CD4-positive, alpha-beta T cell (primary cell): ENCODE measurements at regions of chr2 and their contacts with region 1.

Region 1: DNA sequence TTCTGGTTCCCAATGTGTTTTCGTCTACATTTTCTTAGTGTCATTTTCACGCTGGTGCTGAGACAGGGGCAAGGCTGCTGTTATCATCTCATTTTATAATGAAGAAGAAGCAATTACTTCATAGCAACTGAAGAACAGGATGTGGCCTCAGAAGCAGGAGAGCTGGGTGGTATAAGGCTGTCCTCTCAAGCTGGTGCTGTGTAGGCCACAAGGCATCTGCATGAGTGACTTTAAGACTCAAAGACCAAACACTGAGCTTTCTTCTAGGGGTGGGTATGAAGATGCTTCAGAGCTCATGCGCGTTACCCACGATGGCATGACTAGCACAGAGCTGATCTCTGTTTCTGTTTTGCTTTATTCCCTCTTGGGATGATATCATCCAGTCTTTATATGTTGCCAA is 7.3 kb downstream of the IL36G start:
- DNase-seq: peak in 12 of 14 experiments; percentile 3 to 56 (median 26)
- ATAC-seq: peak; percentile 94
- H3K4me3 ChIP-seq: no peak overlapping the region
- H3K4me3 Mint-ChIP-seq: peak overlapping the region; percentile 39
- H3K27ac ChIP-seq: peak overlapping the region in 1 of 2 donors; percentile 11
- H3K27ac Mint-ChIP-seq: peak overlapping the region; percentile 80
- H3K4me1 ChIP-seq: peaks cover 18% of the 10 kb centered on the region
- H3K4me1 Mint-ChIP-seq: peaks cover 30% of the 10 kb centered on the region
- H3K27me3 ChIP-seq: no peaks in the 10 kb centered on the region
- H3K27me3 Mint-ChIP-seq: no peaks in the 10 kb centered on the region
- CTCF ChIP-seq: peak; percentile 7

Region 2: GRCh38 chr2:112996635-112997034 is 11.5 kb after region 1 on chr2:
- CTCF ChIA-PET with region 1: interaction called, 3 read pairs
- POLR2A ChIA-PET with region 1: interaction called, 19 read pairs
- intact Hi-C with region 1: no loop called
- DNase-seq: peak; percentile 61 to 93 (median 72)
- ATAC-seq: peak; percentile 96
- H3K4me3 ChIP-seq: no peak overlapping the region
- H3K4me3 Mint-ChIP-seq: peak overlapping the region; percentile 64
- H3K27ac ChIP-seq: peak overlapping the region; percentile 42 to 71
- H3K27ac Mint-ChIP-seq: peak overlapping the region; percentile 91
- H3K4me1 ChIP-seq: peaks cover 27% of the 10 kb centered on the region
- H3K4me1 Mint-ChIP-seq: peaks cover 54% of the 10 kb centered on the region
- H3K27me3 ChIP-seq: no peaks in the 10 kb centered on the region
- H3K27me3 Mint-ChIP-seq: no peaks in the 10 kb centered on the region
- CTCF ChIP-seq: no peak

Region 3: GRCh38 chr2:113124181-113124961 is 139.3 kb after region 1 on chr2:
- CTCF ChIA-PET with region 1: no interaction called
- POLR2A ChIA-PET with region 1: no interaction called
- intact Hi-C with region 1: no loop called
- DNase-seq: peak in 2 of 14 experiments; percentile 45
- ATAC-seq: no peak
- H3K4me3 ChIP-seq: no peak overlapping the region
- H3K4me3 Mint-ChIP-seq: no peak overlapping the region
- H3K27ac ChIP-seq: no peak overlapping the region
- H3K27ac Mint-ChIP-seq: no peak overlapping the region
- H3K4me1 ChIP-seq: peaks cover 10% of the 10 kb centered on the region
- H3K4me1 Mint-ChIP-seq: no peaks in the 10 kb centered on the region
- H3K27me3 ChIP-seq: no peaks in the 10 kb centered on the region
- H3K27me3 Mint-ChIP-seq: peaks cover 21% of the 10 kb centered on the region
- CTCF ChIP-seq: no peak

Region 4: DNA sequence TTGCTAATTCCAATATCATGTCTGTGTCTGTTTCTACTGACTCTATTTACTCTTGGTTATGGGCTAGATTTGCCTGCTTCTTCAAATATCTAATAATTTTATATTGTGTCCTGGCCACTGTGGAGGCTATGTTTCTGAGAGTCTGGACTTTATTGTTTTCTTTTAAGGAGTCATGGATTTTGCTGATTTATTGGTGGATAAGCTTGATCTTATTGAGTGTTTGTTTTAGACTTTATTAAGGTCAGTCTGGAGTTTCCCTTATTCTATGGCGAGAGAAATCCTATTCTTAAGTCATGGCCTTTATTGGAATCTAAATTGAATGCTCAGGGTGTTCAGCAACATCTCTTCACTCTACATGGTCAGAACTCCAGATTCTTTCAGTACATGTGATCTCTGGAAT is 397.4 kb after region 1 on chr2:
- CTCF ChIA-PET with region 1: no interaction called
- POLR2A ChIA-PET with region 1: no interaction called
- intact Hi-C with region 1: loop called in 1 of 2 experiments (anchors 10 kb)
- DNase-seq: no peak
- ATAC-seq: no peak
- H3K4me3 ChIP-seq: no peak overlapping the region
- H3K4me3 Mint-ChIP-seq: no peak overlapping the region
- H3K27ac ChIP-seq: no peak overlapping the region
- H3K27ac Mint-ChIP-seq: no peak overlapping the region
- H3K4me1 ChIP-seq: no peaks in the 10 kb centered on the region
- H3K4me1 Mint-ChIP-seq: no peaks in the 10 kb centered on the region
- H3K27me3 ChIP-seq: peaks cover 0 to 4% of the 10 kb centered on the region in 2 experiments
- H3K27me3 Mint-ChIP-seq: peaks cover 12% of the 10 kb centered on the region
- CTCF ChIP-seq: no peak